ENCODE measurements at regions of chr2 and their contacts with region 1.

Region 1: GRCh38 chr2:174522553-174522952 is 35.7 kb upstream of the GPR155 start:
- DNase-seq: no peak
- ATAC-seq: no peak
- H3K4me3 Mint-ChIP-seq: no peak overlapping the region
- H3K27ac Mint-ChIP-seq: no peak overlapping the region
- H3K4me1 Mint-ChIP-seq: peaks cover 16% of the 10 kb centered on the region
- H3K27me3 Mint-ChIP-seq: no peaks in the 10 kb centered on the region

Region 2: DNA sequence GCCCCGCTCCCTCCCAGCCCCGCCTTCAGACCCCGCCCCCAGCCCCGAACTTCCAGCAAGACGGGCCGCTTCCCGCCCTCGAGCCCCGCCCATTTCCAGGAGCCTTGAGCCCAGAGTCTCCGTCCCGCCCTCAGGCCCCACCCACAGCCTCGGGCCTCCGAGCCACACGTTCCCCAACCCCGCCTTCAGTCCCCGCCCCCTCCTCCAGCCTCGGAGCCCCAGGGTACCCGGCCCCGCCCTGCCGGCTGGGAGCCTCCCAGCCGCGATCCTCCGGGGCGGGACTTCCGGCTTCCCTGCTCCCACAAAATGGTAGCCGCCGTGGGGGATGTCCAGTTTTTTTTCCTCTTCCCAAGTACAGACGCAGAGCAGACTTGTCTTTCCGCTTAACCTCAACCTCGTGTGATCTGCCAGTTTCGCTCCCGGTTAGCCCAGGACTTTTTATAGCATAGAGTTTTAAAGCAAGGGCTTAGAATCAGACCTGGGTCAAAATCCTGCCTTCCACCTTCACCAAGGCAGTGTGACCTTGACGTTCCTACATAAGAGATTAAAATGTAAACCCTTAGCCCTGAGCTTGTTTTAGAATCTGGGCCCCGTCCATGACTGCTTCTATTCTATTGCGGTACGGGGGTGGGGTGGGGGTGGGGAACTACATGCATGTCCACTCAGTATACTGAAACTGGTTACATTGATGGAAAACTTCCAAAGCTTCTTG is 35.3 kb before region 1 on chr2:
- CTCF ChIA-PET with region 1: interaction called, 24 read pairs
- DNase-seq: peak; percentile 100
- ATAC-seq: peak; percentile 92
- H3K4me3 Mint-ChIP-seq: peak overlapping the region; percentile 95
- H3K27ac Mint-ChIP-seq: peak overlapping the region; percentile 79
- H3K4me1 Mint-ChIP-seq: peaks cover 59% of the 10 kb centered on the region
- H3K27me3 Mint-ChIP-seq: no peaks in the 10 kb centered on the region